Ovary (tissue), 10 donors: ENCODE measurements at regions of chr2 and their contacts with region 1.

Region 1: GRCh38 chr2:136495636-136496035 is 269.7 kb upstream of the THSD7B start:
- DNase-seq: no peak
- H3K4me3 ChIP-seq: no peak overlapping the region
- H3K27ac ChIP-seq: no peak overlapping the region
- H3K4me1 ChIP-seq: no peaks in the 10 kb centered on the region
- H3K27me3 ChIP-seq: no peaks in the 10 kb centered on the region
- CTCF ChIP-seq: no peak
- EP300 ChIP-seq: no peak
- POLR2A ChIP-seq: no peak

Region 2: GRCh38 chr2:136075466-136075865 is 420.2 kb before region 1 on chr2:
- intact Hi-C with region 1: no loop called
- DNase-seq: no peak
- H3K4me3 ChIP-seq: no peak overlapping the region
- H3K27ac ChIP-seq: no peak overlapping the region
- H3K4me1 ChIP-seq: no peaks in the 10 kb centered on the region
- H3K27me3 ChIP-seq: no peaks in the 10 kb centered on the region
- CTCF ChIP-seq: no peak
- EP300 ChIP-seq: no peak
- POLR2A ChIP-seq: no peak

Region 3: DNA sequence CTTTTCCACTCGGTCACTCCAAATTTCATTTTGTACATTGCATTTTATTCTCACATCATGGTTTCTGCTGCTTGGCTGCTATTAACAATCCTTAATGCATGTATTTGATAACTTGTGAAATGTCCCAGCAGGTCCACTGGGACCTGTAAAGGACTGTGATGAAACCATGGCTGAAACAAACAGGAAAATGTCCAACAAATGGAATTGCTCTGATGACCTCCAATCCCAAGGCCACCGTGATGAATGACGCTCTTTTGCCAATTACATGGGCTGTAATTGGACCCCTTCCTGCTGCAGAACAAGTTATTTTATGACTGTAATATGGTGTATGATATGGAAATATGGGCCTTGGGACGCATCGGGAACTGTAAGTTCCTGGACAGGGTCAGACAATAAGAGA is 153.5 kb before region 1 on chr2:
- intact Hi-C with region 1: loop called in 1 of 4 experiments (anchors 2 kb)
- DNase-seq: no peak
- H3K4me3 ChIP-seq: no peak overlapping the region
- H3K27ac ChIP-seq: no peak overlapping the region
- H3K4me1 ChIP-seq: no peaks in the 10 kb centered on the region
- H3K27me3 ChIP-seq: no peaks in the 10 kb centered on the region
- CTCF ChIP-seq: no peak
- EP300 ChIP-seq: no peak
- POLR2A ChIP-seq: no peak

Region 4: DNA sequence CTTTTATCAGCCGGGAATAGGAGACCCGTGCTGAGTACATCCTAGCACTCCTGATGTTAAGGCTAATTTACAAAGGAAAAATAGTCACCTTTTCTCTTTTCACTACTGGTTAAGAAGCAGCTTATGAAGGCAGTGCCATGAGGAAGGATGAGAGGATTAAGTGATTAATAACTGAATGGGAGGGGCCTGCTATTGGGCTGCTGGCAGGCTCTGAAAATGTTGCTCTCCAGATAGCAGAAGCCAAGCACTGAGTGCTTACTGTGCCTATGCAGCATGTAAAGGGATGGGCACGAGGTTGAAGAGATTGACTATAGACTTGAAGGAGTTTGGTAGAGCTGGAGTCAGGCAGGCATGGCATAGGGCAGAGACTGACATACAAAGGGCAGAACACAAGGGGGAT is 12.7 kb before region 1 on chr2:
- intact Hi-C with region 1: loop called in 1 of 4 experiments (anchors 1 kb)
- DNase-seq: no peak
- H3K4me3 ChIP-seq: no peak overlapping the region
- H3K27ac ChIP-seq: no peak overlapping the region
- H3K4me1 ChIP-seq: no peaks in the 10 kb centered on the region
- H3K27me3 ChIP-seq: no peaks in the 10 kb centered on the region
- CTCF ChIP-seq: no peak
- EP300 ChIP-seq: no peak
- POLR2A ChIP-seq: no peak